Caco-2 (cell line): ENCODE measurements at regions of chr12 and their contacts with region 1.

Region 1: GRCh38 chr12:20018406-20018805 is 349.9 kb upstream of the PDE3A start:
- DNase-seq: peak in 1 of 2 experiments; percentile 41
- H3K4me3 ChIP-seq: no peak overlapping the region
- H3K4me3 Mint-ChIP-seq: no peak overlapping the region
- H3K27ac Mint-ChIP-seq: peak overlapping the region; percentile 62
- H3K4me1 ChIP-seq: peaks cover 14% of the 10 kb centered on the region
- H3K4me1 Mint-ChIP-seq: peaks cover 13% of the 10 kb centered on the region
- H3K27me3 ChIP-seq: no peaks in the 10 kb centered on the region
- H3K27me3 Mint-ChIP-seq: no peaks in the 10 kb centered on the region
- CTCF ChIP-seq: no peak

Region 2: DNA sequence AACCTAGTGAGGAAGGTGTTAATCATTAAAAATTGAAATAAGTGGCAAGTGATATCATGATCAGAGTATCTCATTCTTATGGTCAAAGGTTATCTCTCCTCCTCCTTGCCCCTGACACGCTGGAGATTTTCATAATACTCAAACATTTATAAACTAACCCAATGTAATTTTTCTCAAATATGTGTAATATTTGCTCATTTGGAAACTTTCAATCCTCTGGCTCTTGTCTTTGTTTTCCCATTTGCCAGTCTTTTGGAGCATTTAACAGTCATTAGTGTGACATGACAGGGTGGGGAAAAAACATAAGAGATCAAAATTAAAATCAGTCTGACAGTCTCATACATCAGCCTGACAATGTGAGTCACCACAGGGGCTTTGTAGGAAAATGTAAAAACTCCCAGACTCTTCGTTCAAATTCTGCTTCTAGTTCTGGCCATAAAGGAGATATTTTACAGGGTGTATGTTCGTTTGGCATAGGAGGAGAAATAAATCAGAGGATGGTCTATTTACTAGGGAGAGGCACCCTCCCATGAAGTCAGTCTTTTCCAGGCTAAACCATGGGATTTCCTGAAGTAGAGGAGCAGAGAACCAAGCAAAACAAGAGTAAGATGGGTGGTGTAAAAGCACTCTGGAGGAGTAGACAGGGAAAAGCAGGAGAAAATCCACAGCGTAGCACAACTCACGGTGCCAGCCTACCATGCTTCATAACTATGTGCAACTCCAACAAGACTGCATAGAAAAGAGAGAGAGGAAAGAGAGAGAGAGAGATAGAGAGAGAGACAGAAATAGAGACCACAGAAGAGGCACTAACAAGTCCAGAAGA is 19.2 kb before region 1 on chr12:
- CTCF ChIA-PET with region 1: no interaction called
- POLR2A ChIA-PET with region 1: no interaction called
- intact Hi-C with region 1: loop called (anchors 1 kb)
- DNase-seq: no peak
- H3K4me3 ChIP-seq: no peak overlapping the region
- H3K4me3 Mint-ChIP-seq: no peak overlapping the region
- H3K27ac Mint-ChIP-seq: no peak overlapping the region
- H3K4me1 ChIP-seq: peaks cover 34% of the 10 kb centered on the region
- H3K4me1 Mint-ChIP-seq: peaks cover 13% of the 10 kb centered on the region
- H3K27me3 ChIP-seq: no peaks in the 10 kb centered on the region
- H3K27me3 Mint-ChIP-seq: no peaks in the 10 kb centered on the region
- CTCF ChIP-seq: no peak

Region 3: GRCh38 chr12:20272801-20273200 is 254.4 kb after region 1 on chr12:
- CTCF ChIA-PET with region 1: no interaction called
- POLR2A ChIA-PET with region 1: no interaction called
- intact Hi-C with region 1: no loop called
- DNase-seq: no peak
- H3K4me3 ChIP-seq: no peak overlapping the region
- H3K4me3 Mint-ChIP-seq: no peak overlapping the region
- H3K27ac Mint-ChIP-seq: no peak overlapping the region
- H3K4me1 ChIP-seq: no peaks in the 10 kb centered on the region
- H3K4me1 Mint-ChIP-seq: no peaks in the 10 kb centered on the region
- H3K27me3 ChIP-seq: no peaks in the 10 kb centered on the region
- H3K27me3 Mint-ChIP-seq: no peaks in the 10 kb centered on the region
- CTCF ChIP-seq: no peak